ENCODE measurements at regions of chr11 and their contacts with region 1.

Region 1: DNA sequence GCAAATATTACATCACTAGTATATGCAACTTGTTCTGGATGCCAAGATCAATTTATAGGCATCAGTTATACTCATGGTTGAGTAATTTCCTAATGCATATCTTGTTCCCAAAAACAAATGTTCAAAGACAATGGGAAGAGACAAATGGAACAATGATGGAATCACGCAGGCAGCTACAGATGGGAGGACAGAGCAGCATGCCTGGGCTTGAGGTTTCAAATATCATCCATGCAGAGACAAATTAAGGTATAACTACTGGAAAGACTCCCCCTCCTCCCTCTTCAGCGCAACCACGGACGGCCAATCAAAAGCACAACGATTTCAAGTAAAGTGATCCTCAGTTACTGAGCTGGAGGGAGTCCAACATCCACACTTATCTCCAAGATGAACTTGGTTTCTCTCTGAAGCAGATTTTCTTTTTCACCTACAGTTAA is 106.8 kb downstream of the CCDC83 start:
- DNase-seq: no peak
- ATAC-seq: peak; percentile 67 to 82 (median 80)
- H3K4me3 ChIP-seq: no peak overlapping the region
- H3K27ac ChIP-seq: peak overlapping the region; percentile 64
- H3K4me1 ChIP-seq: peaks cover 14% of the 10 kb centered on the region
- H3K27me3 ChIP-seq: no peaks in the 10 kb centered on the region
- CTCF ChIP-seq: no peak

Region 2: DNA sequence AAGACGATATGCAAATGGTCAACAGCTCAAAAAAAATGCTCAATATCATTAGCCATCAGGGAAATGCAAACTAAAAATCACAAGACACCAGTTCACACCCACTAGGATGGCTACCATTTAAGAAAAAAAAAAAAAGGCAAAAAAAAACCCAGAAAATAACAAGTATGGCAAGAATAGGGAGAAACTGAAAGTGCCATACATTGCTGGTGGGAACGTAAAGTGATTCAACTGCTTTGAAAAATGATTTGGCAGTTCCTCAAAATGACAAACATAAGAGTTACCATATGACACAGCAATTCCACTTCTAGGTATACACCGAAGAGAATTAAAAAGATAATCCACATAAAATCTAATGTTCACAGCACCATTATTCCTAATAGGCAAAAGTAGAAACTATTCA is 59.4 kb after region 1 on chr11:
- intact Hi-C with region 1: loop called in 1 of 2 experiments (anchors 5 kb)
- DNase-seq: no peak
- ATAC-seq: no peak
- H3K4me3 ChIP-seq: no peak overlapping the region
- H3K27ac ChIP-seq: peak overlapping the region; percentile 7
- H3K4me1 ChIP-seq: no peaks in the 10 kb centered on the region
- H3K27me3 ChIP-seq: no peaks in the 10 kb centered on the region
- CTCF ChIP-seq: no peak

Measured in psoas muscle (tissue), 8 donors.